GM10248 (cell line): ENCODE measurements at regions of chr6 and their contacts with region 1.

Region 1: DNA sequence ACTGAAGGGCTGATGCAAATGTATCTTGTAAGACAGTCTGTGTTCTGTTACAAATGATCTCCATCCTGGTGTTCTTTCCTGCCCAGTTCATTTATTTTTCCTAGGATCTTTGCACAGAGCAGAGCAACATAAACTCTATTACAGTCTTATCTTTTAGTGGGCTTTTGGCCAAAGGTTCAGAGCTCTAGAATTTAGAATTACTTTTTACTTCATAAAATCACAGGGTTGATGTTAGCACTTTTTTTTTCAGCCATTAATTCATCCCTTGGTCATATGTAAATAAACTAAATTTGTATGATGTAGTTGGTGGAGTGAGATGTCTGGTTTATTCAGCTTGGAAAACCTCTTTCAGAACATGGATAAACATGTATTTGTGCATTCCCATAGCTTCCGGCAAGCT is 181.9 kb downstream of the ZFAND3 start:
- DNase-seq: no peak
- CTCF ChIP-seq: no peak

Region 2: DNA sequence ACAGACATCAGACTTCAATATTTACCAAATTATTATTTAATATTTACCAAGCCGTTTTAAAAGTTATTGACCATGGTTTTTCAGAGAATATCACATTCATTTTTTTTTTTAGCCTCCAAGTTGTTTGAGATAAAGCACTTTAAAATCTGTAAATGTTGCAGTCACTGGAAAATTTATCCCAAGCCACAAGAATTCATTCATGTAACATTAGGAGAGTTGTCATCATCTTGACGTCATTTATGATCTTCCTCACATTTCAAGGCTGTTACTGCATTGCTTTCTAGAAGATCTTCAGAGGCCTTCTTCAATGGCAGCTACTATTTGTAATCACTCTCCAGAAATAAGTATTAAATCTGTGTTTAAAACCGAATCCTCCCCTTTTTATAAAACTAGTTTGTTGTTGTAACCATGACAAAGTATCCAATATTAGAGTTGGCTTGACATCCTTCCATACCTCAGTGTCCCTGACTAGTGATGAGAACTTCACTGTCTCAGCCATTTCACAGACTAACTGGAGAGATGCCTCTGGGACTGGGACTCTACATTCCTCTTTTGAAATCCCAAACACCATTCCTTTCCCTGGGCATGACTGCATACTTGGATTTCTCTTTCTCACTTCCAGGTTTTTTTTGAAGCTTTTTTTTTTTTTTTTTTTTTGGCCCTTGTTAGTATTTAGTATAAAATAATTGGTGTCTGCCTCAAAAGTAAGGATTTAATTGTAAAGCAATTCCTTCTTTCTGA is 81.8 kb before region 1 on chr6:
- CTCF ChIA-PET with region 1: no interaction called
- POLR2A ChIA-PET with region 1: no interaction called
- DNase-seq: no peak
- CTCF ChIP-seq: no peak

Region 3: DNA sequence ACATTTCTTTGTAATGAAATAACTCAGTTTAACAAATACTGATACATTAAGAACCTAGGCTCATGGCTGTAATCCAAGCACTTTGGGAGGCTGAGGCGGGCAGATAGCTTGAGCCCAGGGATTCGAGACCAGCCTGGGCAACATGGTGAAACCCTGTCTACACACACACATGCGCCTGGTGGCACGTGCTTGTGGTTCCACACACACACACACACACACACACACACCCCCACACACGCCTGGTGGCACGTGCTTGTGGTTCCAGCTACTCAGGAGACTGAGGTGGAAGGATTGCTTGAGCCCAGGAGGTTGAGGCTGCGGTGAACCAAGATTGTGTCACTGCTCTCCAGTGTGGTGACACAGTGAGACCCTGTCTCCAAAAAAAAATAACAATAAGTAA is 16.1 kb before region 1 on chr6:
- CTCF ChIA-PET with region 1: interaction called, 18 read pairs
- POLR2A ChIA-PET with region 1: no interaction called
- DNase-seq: no peak
- CTCF ChIP-seq: no peak

Region 4: GRCh38 chr6:37990762-37991525 is 10.4 kb before region 1 on chr6:
- CTCF ChIA-PET with region 1: interaction called, 18 read pairs
- POLR2A ChIA-PET with region 1: no interaction called
- DNase-seq: no peak
- CTCF ChIP-seq: no peak